ENCODE measurements at regions of chr17 and their contacts with region 1.

Region 1: GRCh38 chr17:64582879-64583632 is 76.3 kb downstream of the CEP95 start:
- DNase-seq: no peak
- H3K4me3 ChIP-seq: no peak overlapping the region
- H3K27ac ChIP-seq: no peak overlapping the region
- H3K4me1 ChIP-seq: no peaks in the 10 kb centered on the region
- H3K27me3 ChIP-seq: no peaks in the 10 kb centered on the region

Region 2: GRCh38 chr17:64531955-64532371 is 51.1 kb before region 1 on chr17:
- CTCF ChIA-PET with region 1: no interaction called
- POLR2A ChIA-PET with region 1: no interaction called
- DNase-seq: no peak
- H3K4me3 ChIP-seq: no peak overlapping the region
- H3K27ac ChIP-seq: no peak overlapping the region
- H3K4me1 ChIP-seq: no peaks in the 10 kb centered on the region
- H3K27me3 ChIP-seq: no peaks in the 10 kb centered on the region

Region 3: GRCh38 chr17:64572638-64573154 is 10.4 kb before region 1 on chr17:
- CTCF ChIA-PET with region 1: interaction called, 11 read pairs
- POLR2A ChIA-PET with region 1: no interaction called
- DNase-seq: peak; percentile 29 to 72 (median 65)
- H3K4me3 ChIP-seq: no peak overlapping the region
- H3K27ac ChIP-seq: peak overlapping the region in 1 of 2 experiments; percentile 78
- H3K4me1 ChIP-seq: peaks cover 0 to 4% (median 1%) of the 10 kb centered on the region in 4 experiments
- H3K27me3 ChIP-seq: no peaks in the 10 kb centered on the region